ENCODE measurements at regions of chr10 and their contacts with region 1.

Region 1: DNA sequence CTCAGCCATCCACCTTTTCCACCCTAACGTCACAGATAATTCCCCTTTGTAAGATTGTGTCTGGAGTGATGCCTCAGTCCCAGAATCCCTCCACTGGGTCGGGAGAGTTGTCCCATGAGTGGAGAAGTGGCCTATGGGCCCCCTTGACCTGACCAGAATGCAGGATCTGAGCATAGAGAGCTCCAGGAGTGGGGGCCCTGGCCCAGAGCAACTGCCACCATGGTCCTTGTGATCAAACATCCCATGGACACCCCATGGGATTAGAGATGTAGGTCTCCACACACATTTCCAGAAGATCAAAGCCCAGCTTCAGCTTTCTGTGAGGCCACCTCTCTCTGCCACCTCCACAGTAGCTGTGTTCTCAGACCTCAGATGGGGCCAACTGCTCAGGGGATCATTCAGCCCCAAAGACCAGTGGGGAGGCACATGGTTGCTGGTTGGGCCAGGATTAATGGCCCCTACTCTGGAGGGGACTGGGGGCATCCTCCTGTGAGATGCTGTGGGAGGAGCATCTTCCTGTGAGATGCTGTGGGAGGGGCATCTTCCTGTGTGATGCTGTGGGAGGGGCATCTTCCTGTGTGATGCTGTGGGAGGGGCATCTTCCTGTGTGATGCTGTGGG is 28.5 kb upstream of the DPYSL4 start:
- DNase-seq: peak in 5 of 9 experiments; percentile 21 to 74 (median 46)
- ATAC-seq: peak; percentile 20
- H3K4me3 ChIP-seq: no peak overlapping the region
- H3K4me3 Mint-ChIP-seq: no peak overlapping the region
- H3K27ac ChIP-seq: peak overlapping the region; percentile 98 to 99
- H3K27ac Mint-ChIP-seq: peak overlapping the region; percentile 87
- H3K4me1 ChIP-seq: peaks cover 30% of the 10 kb centered on the region
- H3K4me1 Mint-ChIP-seq: peaks cover 19% of the 10 kb centered on the region
- H3K27me3 ChIP-seq: no peaks in the 10 kb centered on the region
- H3K27me3 Mint-ChIP-seq: no peaks in the 10 kb centered on the region
- CTCF ChIP-seq: no peak

Region 2: GRCh38 chr10:131981429-131982184 is 176.6 kb before region 1 on chr10 and contains the start of gene BNIP3:
- CTCF ChIA-PET with region 1: no interaction called
- POLR2A ChIA-PET with region 1: no interaction called
- intact Hi-C with region 1: loop called in 1 of 2 experiments (anchors 10 kb)
- DNase-seq: peak; percentile 84 to 98 (median 94)
- ATAC-seq: peak; percentile 90
- H3K4me3 ChIP-seq: peak within 1 kb of the TSS; percentile 66 to 83
- H3K4me3 Mint-ChIP-seq: peak within 1 kb of the TSS; percentile 84
- H3K27ac ChIP-seq: peak within 1 kb of the TSS; percentile 43 to 48
- H3K27ac Mint-ChIP-seq: peak within 1 kb of the TSS; percentile 81
- H3K4me1 ChIP-seq: peaks cover 47% of the 10 kb centered on the region
- H3K4me1 Mint-ChIP-seq: peaks cover 40% of the 10 kb centered on the region
- H3K27me3 ChIP-seq: no peaks in the 10 kb centered on the region
- H3K27me3 Mint-ChIP-seq: no peaks in the 10 kb centered on the region
- CTCF ChIP-seq: no peak
- total RNA-seq, gene BNIP3: 19.2 to 21.3 TPM

Region 3: GRCh38 chr10:132129431-132129830 is 28.8 kb before region 1 on chr10:
- CTCF ChIA-PET with region 1: no interaction called
- POLR2A ChIA-PET with region 1: no interaction called
- intact Hi-C with region 1: no loop called
- DNase-seq: no peak
- ATAC-seq: no peak
- H3K4me3 ChIP-seq: no peak overlapping the region
- H3K4me3 Mint-ChIP-seq: no peak overlapping the region
- H3K27ac ChIP-seq: no peak overlapping the region
- H3K27ac Mint-ChIP-seq: no peak overlapping the region
- H3K4me1 ChIP-seq: no peaks in the 10 kb centered on the region
- H3K4me1 Mint-ChIP-seq: no peaks in the 10 kb centered on the region
- H3K27me3 ChIP-seq: no peaks in the 10 kb centered on the region
- H3K27me3 Mint-ChIP-seq: peaks cover 18% of the 10 kb centered on the region
- CTCF ChIP-seq: no peak

Region 4: GRCh38 chr10:132185601-132186487 is 27.6 kb after region 1 on chr10:
- CTCF ChIA-PET with region 1: no interaction called
- POLR2A ChIA-PET with region 1: no interaction called
- intact Hi-C with region 1: loop called in 1 of 2 experiments (anchors 1 kb)
- DNase-seq: peak; percentile 28 to 81 (median 59)
- ATAC-seq: peak; percentile 92
- H3K4me3 ChIP-seq: peak overlapping the region; percentile 32 to 39
- H3K4me3 Mint-ChIP-seq: no peak overlapping the region
- H3K27ac ChIP-seq: no peak overlapping the region
- H3K27ac Mint-ChIP-seq: no peak overlapping the region
- H3K4me1 ChIP-seq: peaks cover 17% of the 10 kb centered on the region
- H3K4me1 Mint-ChIP-seq: peaks cover 7% of the 10 kb centered on the region
- H3K27me3 ChIP-seq: peaks cover 10 to 11% of the 10 kb centered on the region in 2 experiments
- H3K27me3 Mint-ChIP-seq: peaks cover 56% of the 10 kb centered on the region
- CTCF ChIP-seq: no peak

Region 5: GRCh38 chr10:132961787-132962622 is 803.8 kb after region 1 on chr10:
- CTCF ChIA-PET with region 1: no interaction called
- POLR2A ChIA-PET with region 1: no interaction called
- intact Hi-C with region 1: loop called in 1 of 2 experiments (anchors 5 kb)
- DNase-seq: peak; percentile 30 to 80 (median 65)
- ATAC-seq: peak; percentile 82
- H3K4me3 ChIP-seq: peak overlapping the region; percentile 72 to 77
- H3K4me3 Mint-ChIP-seq: peak overlapping the region; percentile 98
- H3K27ac ChIP-seq: peak overlapping the region; percentile 22 to 46
- H3K27ac Mint-ChIP-seq: peak overlapping the region; percentile 62
- H3K4me1 ChIP-seq: peaks cover 8% of the 10 kb centered on the region
- H3K4me1 Mint-ChIP-seq: peaks cover 16% of the 10 kb centered on the region
- H3K27me3 ChIP-seq: no peaks in the 10 kb centered on the region
- H3K27me3 Mint-ChIP-seq: peaks cover 6% of the 10 kb centered on the region
- CTCF ChIP-seq: no peak

Measured in CD8-positive, alpha-beta T cell (primary cell).